ENCODE measurements at regions of chr5 and their contacts with region 1.

Region 1: DNA sequence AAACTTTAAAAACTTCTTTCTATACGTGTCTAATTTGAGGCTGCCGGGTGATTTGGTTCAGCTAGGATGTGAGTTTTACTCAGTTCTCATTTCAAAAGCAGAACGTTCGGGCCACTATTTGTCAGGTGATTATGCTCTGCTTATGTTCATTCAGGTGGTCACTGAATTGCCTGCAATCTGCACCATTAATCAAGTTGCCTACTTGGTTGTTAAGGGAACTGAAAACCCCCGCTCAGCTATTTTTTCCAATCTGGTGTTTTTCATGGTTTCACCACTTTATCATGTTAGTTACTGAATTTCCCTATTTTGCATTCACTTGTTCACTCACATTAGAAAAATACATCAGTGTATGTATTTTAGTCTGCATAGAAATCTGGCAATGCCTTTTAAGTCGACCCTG is 523.0 kb downstream of the CSNK1G3 start:
- DNase-seq: peak; percentile 90
- H3K4me3 ChIP-seq: peak overlapping the region; percentile 46
- H3K27ac ChIP-seq: peak overlapping the region; percentile 92
- H3K4me1 ChIP-seq: peaks cover 49% of the 10 kb centered on the region
- CTCF ChIP-seq: no peak

Region 2: DNA sequence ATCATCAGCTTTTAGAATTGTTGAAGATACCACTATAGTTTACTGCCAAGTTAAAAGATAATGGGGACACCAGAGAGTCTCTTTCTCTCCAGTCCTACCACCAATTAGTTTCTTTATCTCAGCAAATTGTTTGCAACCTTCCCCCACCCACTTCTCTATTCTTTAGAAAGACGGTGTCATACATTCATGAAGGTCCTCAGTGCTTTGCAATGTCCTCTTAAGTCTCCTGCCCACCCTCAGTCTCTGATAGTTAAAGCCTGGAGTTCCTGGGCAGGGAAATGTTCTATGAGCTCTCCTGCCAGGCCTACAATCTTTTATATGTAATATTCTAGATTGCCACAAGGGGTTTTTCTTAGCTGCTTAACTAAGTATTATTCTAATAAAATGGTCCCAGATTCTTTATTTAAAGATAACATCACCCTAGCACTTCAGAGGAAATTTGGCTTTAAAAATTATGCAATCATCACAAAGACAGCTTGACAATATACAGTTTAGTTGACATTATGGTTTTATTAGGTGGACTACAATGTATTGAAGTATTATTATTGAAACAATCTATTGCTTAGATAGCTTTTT is 13.8 kb before region 1 on chr5:
- CTCF ChIA-PET with region 1: no interaction called
- POLR2A ChIA-PET with region 1: interaction called, 15 read pairs
- intact Hi-C with region 1: no loop called
- DNase-seq: no peak
- H3K4me3 ChIP-seq: no peak overlapping the region
- H3K27ac ChIP-seq: no peak overlapping the region
- H3K4me1 ChIP-seq: no peaks in the 10 kb centered on the region
- CTCF ChIP-seq: peak; percentile 57

Region 3: GRCh38 chr5:124056991-124057723 is 22.2 kb after region 1 on chr5:
- CTCF ChIA-PET with region 1: no interaction called
- POLR2A ChIA-PET with region 1: interaction called, 7 read pairs
- intact Hi-C with region 1: loop called (anchors 2 kb)
- DNase-seq: peak; percentile 80
- H3K4me3 ChIP-seq: peak overlapping the region; percentile 58
- H3K27ac ChIP-seq: peak overlapping the region; percentile 31
- H3K4me1 ChIP-seq: peaks cover 35% of the 10 kb centered on the region
- CTCF ChIP-seq: no peak

Region 4: GRCh38 chr5:124162779-124163532 is 128.0 kb after region 1 on chr5:
- CTCF ChIA-PET with region 1: no interaction called
- POLR2A ChIA-PET with region 1: interaction called, 4 read pairs
- intact Hi-C with region 1: loop called (anchors 2 kb)
- DNase-seq: peak; percentile 72
- H3K4me3 ChIP-seq: peak overlapping the region; percentile 19
- H3K27ac ChIP-seq: peak overlapping the region; percentile 59
- H3K4me1 ChIP-seq: peaks cover 15% of the 10 kb centered on the region
- CTCF ChIP-seq: no peak

Region 5: GRCh38 chr5:124252191-124252638 is 217.3 kb after region 1 on chr5:
- CTCF ChIA-PET with region 1: no interaction called
- POLR2A ChIA-PET with region 1: no interaction called
- intact Hi-C with region 1: no loop called
- DNase-seq: peak; percentile 3
- H3K4me3 ChIP-seq: no peak overlapping the region
- H3K27ac ChIP-seq: no peak overlapping the region
- H3K4me1 ChIP-seq: no peaks in the 10 kb centered on the region
- CTCF ChIP-seq: no peak

Region 6: DNA sequence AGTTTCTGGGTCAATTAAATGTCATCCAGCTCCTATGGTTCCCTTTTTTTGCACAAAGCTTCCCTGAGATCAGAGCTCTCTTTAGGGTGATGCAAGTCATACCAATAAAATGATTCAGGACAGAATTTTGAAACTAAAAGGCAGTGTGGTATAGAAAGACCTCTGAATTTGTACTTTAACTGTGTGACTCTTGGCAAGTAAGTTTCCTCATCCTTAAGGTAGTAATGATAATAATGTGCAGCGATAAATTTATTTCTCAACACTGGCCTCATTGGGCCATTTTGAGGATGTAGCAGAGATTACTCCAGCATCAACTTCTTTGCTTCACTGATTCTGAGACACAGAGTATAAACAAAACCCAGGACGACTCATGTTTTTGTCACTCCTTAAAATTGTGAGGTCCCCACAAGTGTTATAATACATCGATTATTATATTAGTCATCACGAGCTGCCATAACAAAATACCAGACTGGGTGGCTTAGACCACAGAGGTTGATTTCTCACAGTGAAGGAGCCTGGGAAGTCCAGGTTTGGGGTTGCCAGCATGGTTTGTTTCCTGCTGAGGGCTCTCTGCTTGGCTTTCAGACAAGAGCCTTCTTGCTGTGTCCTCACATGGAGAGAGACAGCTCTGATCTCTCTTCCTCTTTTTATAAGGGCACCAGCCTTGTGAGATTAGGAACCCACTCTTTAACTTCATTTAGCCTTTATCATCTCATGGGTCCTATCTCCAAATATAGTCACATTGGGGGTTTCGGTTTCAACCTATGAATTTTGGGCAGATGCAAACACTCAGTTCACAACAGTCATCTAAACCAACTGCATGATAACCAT is 418.5 kb after region 1 on chr5:
- CTCF ChIA-PET with region 1: no interaction called
- POLR2A ChIA-PET with region 1: no interaction called
- intact Hi-C with region 1: loop called (anchors 10 kb)
- DNase-seq: peak; percentile 91
- H3K4me3 ChIP-seq: peak overlapping the region; percentile 19
- H3K27ac ChIP-seq: peak overlapping the region; percentile 86
- H3K4me1 ChIP-seq: peaks cover 63% of the 10 kb centered on the region
- CTCF ChIP-seq: 0 out of 2 replicates have a peak, but pooled peaks have one; percentile 25

Measured in OCI-LY7 (cell line).